GM12878 (cell line): ENCODE measurements at regions of chr17 and their contacts with region 1.

Region 1: DNA sequence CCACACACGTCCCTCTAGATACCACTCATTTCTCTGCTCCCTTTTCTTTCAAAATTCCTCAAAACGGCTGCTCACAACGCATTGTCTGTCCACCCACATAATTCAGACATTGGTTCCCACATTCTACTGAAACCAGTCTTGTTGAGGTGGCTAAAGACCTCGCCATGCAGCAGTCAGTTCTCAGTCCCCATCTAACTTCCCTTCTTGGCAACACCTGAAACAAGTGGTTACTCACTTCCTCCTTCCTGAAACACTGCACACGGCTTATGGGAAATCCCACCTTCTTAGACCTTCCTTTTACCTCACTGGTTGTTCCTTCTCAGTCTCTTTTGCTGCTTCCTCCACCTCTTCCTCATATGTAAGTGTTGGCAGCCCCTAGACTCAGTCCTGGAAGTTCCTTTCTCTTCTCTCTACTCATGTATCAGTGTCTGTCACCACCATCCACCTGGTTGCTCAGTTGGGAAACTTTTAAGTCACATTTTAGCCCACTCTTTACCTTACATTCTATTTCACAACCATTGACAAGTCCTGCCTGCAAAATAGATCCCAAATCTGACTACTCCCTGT is 277.1 kb downstream of the CEP112 start:
- DNase-seq: peak; percentile 81
- ATAC-seq: peak; percentile 99
- H3K4me3 ChIP-seq: no peak overlapping the region
- H3K27ac ChIP-seq: peak overlapping the region; percentile 33; the same call in 1 of the 2 replicates
- H3K4me1 ChIP-seq: peaks cover 7% of the 10 kb centered on the region
- H3K27me3 ChIP-seq: no peaks in the 10 kb centered on the region
- CTCF ChIP-seq: no peak
- EP300 ChIP-seq: peak; percentile 80 to 90
- POLR2A ChIP-seq: no peak
- RAD21 ChIP-seq: 0 out of 2 replicates have a peak, but pooled peaks have one; percentile 15

Region 2: GRCh38 chr17:65561394-65562205 is 353.3 kb before region 1 on chr17 and contains the start of gene AXIN2:
- CTCF ChIA-PET with region 1: no interaction called
- POLR2A ChIA-PET with region 1: no interaction called
- RAD21 ChIA-PET with region 1: no interaction called
- SMC1A ChIA-PET with region 1: no interaction called
- in situ Hi-C with region 1: no loop called
- intact Hi-C with region 1: loop called (anchors 5 kb)
- DNase-seq: no peak
- ATAC-seq: peak; percentile 79
- H3K4me3 ChIP-seq: peak within 1 kb of the TSS; percentile 81; the same call in 1 of the 2 replicates
- H3K27ac ChIP-seq: peak within 1 kb of the TSS; percentile 62
- H3K4me1 ChIP-seq: peaks cover 19% of the 10 kb centered on the region
- H3K27me3 ChIP-seq: peaks cover 0 to 5% of the 10 kb centered on the region in 2 experiments; a peak in 2 of 4 replicates
- CTCF ChIP-seq: peak in 2 of 3 experiments; percentile 6 to 38; a peak in 1 of 6 replicates
- EP300 ChIP-seq: no peak
- POLR2A ChIP-seq: no peak
- RAD21 ChIP-seq: no peak
- polyA plus RNA-seq, gene AXIN2: 0.47 to 0.66 TPM

Region 3: DNA sequence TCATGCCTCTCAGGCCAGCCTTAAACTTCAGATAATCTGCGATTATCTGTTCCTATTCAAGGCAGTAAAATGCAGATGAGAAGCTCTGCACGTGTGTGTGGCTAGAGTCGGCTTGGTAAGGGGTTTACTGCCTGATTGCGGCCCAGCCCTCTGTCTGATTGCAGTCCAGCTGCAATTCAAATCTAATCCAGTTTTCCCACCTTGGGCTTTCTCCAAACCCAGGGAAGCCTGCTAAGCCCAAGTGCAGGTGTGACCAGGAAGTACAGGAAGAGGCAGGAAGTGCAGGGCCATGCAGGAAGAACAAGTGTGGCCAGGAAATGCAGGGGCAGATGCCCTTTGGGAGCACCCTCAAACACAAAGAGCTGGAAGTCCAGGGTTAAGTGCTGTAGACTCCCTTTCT is 37.9 kb before region 1 on chr17:
- CTCF ChIA-PET with region 1: no interaction called
- POLR2A ChIA-PET with region 1: no interaction called
- RAD21 ChIA-PET with region 1: no interaction called
- SMC1A ChIA-PET with region 1: no interaction called
- in situ Hi-C with region 1: no loop called
- intact Hi-C with region 1: no loop called
- DNase-seq: no peak
- ATAC-seq: no peak
- H3K4me3 ChIP-seq: no peak overlapping the region
- H3K27ac ChIP-seq: no peak overlapping the region
- H3K4me1 ChIP-seq: no peaks in the 10 kb centered on the region
- H3K27me3 ChIP-seq: no peaks in the 10 kb centered on the region
- CTCF ChIP-seq: no peak
- EP300 ChIP-seq: no peak
- POLR2A ChIP-seq: no peak
- RAD21 ChIP-seq: no peak